Gastrocnemius medialis (tissue), 4 donors: ENCODE measurements at regions of chr12 and their contacts with region 1.

Region 1: DNA sequence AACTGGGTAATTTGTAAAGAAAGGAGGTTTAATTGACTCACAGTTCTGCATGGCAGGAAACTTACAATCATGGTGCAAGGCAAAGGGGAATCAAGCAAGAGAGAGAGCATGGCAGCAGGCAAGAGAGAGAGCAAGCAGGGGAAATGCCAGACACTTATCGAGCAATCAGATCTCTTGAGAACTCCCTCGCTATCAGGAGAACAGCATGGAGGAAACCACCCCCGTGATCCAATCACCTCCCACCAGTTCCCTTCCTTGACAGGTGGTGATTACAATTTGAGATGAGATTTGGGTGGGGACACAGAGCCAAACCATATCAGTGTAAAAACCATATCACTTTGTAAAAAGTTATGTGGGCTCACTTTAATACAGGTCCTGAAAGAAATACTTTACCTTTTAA is 56.4 kb upstream of the NEDD1 start:
- DNase-seq: no peak
- ATAC-seq: no peak
- H3K4me3 ChIP-seq: no peak overlapping the region
- H3K27ac ChIP-seq: no peak overlapping the region
- H3K4me1 ChIP-seq: no peaks in the 10 kb centered on the region
- H3K27me3 ChIP-seq: no peaks in the 10 kb centered on the region
- CTCF ChIP-seq: no peak
- POLR2A ChIP-seq: no peak

Region 2: DNA sequence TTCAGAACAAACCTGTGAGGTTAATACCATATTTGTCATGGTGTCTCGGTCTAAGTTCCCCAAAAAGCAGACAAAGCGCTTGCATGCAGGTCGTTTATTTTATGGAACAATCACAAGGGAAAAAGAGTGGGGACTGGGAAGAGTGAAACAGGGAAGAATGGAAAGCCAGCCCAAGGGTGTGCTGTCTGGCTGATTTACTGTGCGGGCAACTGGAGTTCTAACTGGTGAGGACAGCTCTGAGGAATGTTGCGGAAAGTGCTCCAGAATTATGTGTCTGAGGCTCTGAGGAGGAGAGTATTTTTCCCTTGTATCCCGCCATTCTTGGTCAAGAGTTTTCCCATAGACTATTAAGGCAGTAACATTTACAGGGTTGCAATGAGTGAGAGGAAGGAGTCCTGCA is 1077.3 kb after region 1 on chr12:
- in situ Hi-C with region 1: no loop called
- intact Hi-C with region 1: loop called (anchors 5 kb)
- DNase-seq: no peak
- ATAC-seq: no peak
- H3K4me3 ChIP-seq: no peak overlapping the region
- H3K27ac ChIP-seq: no peak overlapping the region
- H3K4me1 ChIP-seq: no peaks in the 10 kb centered on the region
- H3K27me3 ChIP-seq: no peaks in the 10 kb centered on the region
- CTCF ChIP-seq: no peak
- POLR2A ChIP-seq: no peak